ENCODE measurements at regions of chr6 and their contacts with region 1.

Region 1: GRCh38 chr6:63458480-63459115 is 113.7 kb upstream of the LOC128125822 start:
- DNase-seq: no peak
- H3K4me3 Mint-ChIP-seq: no peak overlapping the region
- H3K27ac Mint-ChIP-seq: peak overlapping the region; percentile 84
- H3K4me1 Mint-ChIP-seq: peaks cover 13% of the 10 kb centered on the region
- H3K27me3 Mint-ChIP-seq: no peaks in the 10 kb centered on the region
- CTCF ChIP-seq: no peak

Region 2: DNA sequence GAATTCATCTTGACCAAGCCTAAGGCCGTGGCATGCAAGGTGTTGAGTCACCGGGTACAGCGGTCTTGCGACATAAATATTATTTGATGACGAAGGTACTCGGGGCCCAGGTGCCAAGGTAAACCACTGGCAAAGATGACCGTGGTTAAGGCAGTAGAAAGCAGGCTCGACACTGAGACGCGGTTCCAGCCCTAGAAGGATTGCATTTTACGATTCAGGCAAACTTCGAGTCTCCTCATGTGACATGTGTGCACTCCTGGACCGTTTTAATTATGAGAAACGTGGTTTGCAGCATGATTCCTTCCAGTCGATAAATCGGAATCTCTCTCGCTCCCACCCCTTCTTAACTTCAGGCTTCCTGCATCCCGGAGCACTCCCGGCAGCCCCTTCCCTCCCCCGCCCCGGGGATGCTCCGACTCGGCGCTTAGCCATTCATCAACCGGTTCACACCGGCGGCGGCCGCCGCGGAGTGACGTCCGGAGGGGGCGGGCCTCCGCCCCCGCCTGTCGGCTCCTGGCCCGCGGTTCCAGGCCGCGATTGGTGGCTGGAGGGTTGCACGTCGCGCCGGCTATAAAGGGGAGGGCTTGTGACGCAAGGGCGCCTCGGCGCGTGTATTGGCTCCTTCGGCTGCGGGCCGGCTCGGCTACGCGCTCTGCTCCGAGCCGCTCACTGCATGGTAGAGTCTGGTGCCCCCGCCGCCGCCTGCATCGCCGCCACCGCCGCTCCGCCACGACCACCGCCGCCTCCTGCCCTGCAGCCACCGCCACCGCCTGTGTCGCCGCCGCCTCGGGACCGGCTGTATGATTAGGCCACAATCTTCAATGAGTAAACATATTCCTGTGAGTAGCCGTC is 113.5 kb after region 1 on chr6 and contains the starts of genes LOC128125822 and PTP4A1:
- CTCF ChIA-PET with region 1: interaction called, 3 read pairs
- intact Hi-C with region 1: loop called (anchors 2 kb)
- DNase-seq: peak; percentile 97
- H3K4me3 Mint-ChIP-seq: peak within 1 kb of the TSS; percentile 88
- H3K27ac Mint-ChIP-seq: peak within 1 kb of the TSS; percentile 95
- H3K4me1 Mint-ChIP-seq: peaks cover 11% of the 10 kb centered on the region
- H3K27me3 Mint-ChIP-seq: no peaks in the 10 kb centered on the region
- CTCF ChIP-seq: no peak
- total RNA-seq, gene PTP4A1: 97.3 and 110 TPM in 2 replicates

Region 3: DNA sequence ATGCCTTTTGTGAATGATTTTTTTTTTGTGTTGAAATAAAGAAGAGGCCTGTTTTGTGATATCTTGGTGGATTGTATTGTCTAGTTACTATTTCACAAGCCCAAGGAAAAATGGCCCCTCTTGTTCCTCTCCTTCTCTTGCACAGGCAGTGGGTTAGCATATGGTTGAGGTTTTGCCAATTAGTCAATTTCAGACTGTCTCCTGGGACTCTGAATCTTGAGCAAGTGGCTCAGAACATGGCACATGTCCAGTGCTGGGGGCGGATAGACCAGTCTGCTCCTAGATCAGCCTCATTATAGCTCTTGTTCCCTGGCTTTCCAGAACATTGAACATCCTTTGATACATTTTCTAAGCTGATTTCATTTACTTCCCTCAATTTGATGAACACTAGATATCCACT is 766.2 kb after region 1 on chr6:
- CTCF ChIA-PET with region 1: no interaction called
- intact Hi-C with region 1: no loop called
- DNase-seq: no peak
- H3K4me3 Mint-ChIP-seq: no peak overlapping the region
- H3K27ac Mint-ChIP-seq: no peak overlapping the region
- H3K4me1 Mint-ChIP-seq: no peaks in the 10 kb centered on the region
- H3K27me3 Mint-ChIP-seq: no peaks in the 10 kb centered on the region
- CTCF ChIP-seq: no peak

Measured in Calu3 (cell line).